Psoas muscle (tissue), 8 donors: ENCODE measurements at regions of chr14 and their contacts with region 1.

Region 1: DNA sequence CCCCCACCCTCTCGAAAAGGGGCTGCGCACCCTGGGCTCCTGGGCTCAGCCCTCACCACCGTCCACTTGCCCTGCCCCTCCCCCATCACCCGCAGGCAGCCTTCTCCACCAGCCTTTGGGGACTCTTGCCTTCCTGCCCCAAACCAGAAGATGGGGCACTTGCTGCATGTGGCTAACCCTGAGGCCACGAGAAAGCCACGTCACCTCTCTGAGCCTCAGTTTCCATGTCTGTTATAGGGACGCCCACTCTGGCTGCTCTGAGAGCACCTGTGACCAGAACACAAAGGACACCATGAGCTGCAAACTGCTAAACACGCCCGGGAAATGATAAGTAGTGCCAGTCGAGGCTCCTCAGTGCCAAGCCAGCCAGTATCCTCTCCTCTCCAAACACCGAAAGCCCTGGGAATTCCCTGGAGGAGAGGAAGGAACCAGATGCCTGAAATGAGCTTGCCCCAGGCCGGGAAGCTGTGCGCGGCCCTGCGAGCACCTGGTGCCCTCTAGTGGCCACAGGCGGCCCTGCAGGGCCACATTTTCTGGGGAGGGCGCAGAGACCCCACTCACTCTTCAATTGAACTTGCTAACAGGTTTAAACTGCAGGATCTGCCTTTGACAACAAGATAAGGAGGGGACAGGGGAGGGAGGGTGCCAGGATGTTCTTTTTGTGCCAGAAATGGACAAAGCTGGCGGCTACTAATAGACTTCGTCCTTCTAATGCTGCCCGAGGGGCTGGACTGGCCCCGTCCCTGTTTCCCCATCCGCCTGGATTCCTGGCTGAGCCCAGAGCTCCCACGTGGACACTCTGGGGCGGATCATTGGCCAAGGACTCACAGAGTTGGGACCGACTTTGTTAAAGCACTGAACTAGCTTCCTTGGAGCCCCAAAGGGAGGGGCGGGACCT is 10.2 kb upstream of the SERPINA9 start:
- DNase-seq: peak; percentile 47 to 71
- ATAC-seq: peak; percentile 42 to 85 (median 71)
- H3K4me3 ChIP-seq: no peak overlapping the region
- H3K27ac ChIP-seq: no peak overlapping the region
- H3K4me1 ChIP-seq: no peaks in the 10 kb centered on the region
- H3K27me3 ChIP-seq: peaks cover 0 to 12% (median 2%) of the 10 kb centered on the region in 3 donors
- CTCF ChIP-seq: peak; percentile 83

Region 2: DNA sequence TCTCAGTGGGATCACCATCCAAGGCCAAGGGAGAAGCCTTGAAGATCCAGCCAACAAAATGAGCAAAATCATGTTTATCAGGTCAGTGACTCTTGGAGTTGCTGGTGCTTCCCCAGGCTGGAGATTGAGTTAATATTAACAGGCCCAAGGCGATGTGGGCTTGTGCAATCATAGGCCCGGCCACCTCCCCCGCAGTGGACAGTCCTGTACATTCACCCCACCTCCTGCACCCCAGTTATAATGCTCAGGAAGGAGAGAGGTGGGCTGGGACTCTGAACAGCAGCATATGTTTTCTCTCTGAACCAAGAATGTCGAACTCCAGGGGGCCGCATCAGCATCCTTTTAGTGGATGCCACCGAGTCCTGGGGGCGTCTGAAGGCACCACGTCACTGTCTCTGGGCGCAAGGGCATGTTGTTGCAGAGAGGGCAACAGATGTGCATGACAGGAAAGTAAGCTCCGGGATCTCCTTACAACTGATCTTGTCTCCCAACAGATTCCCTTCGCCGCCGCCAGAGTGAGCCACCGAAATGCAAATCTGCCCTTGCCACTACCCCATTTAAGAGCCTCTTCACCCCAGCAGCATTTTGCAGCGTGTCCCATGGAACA is 130.9 kb before region 1 on chr14:
- intact Hi-C with region 1: loop called in 1 of 2 experiments (anchors 10 kb)
- DNase-seq: peak in 1 of 2 donors; percentile 35
- ATAC-seq: peak in 1 of 4 donors; percentile 13
- H3K4me3 ChIP-seq: no peak overlapping the region
- H3K27ac ChIP-seq: no peak overlapping the region
- H3K4me1 ChIP-seq: no peaks in the 10 kb centered on the region
- H3K27me3 ChIP-seq: peaks cover 0 to 4% (median 4%) of the 10 kb centered on the region in 3 donors
- CTCF ChIP-seq: no peak

Region 3: GRCh38 chr14:94423453-94424056 is 62.6 kb before region 1 on chr14:
- intact Hi-C with region 1: loop called in 1 of 2 experiments (anchors 5 kb)
- DNase-seq: peak; percentile 57 to 76
- ATAC-seq: peak in 2 of 4 donors; percentile 25 to 50
- H3K4me3 ChIP-seq: no peak overlapping the region
- H3K27ac ChIP-seq: no peak overlapping the region
- H3K4me1 ChIP-seq: no peaks in the 10 kb centered on the region
- H3K27me3 ChIP-seq: peaks cover 0 to 7% (median 2%) of the 10 kb centered on the region in 3 donors
- CTCF ChIP-seq: peak; percentile 28

Region 4: GRCh38 chr14:94501588-94502516 is 15.7 kb after region 1 on chr14:
- intact Hi-C with region 1: no loop called
- DNase-seq: no peak
- ATAC-seq: no peak
- H3K4me3 ChIP-seq: no peak overlapping the region
- H3K27ac ChIP-seq: no peak overlapping the region
- H3K4me1 ChIP-seq: no peaks in the 10 kb centered on the region
- H3K27me3 ChIP-seq: no peaks in the 10 kb centered on the region
- CTCF ChIP-seq: no peak